PC-9 (cell line): ENCODE measurements at regions of chr3 and their contacts with region 1.

Region 1: DNA sequence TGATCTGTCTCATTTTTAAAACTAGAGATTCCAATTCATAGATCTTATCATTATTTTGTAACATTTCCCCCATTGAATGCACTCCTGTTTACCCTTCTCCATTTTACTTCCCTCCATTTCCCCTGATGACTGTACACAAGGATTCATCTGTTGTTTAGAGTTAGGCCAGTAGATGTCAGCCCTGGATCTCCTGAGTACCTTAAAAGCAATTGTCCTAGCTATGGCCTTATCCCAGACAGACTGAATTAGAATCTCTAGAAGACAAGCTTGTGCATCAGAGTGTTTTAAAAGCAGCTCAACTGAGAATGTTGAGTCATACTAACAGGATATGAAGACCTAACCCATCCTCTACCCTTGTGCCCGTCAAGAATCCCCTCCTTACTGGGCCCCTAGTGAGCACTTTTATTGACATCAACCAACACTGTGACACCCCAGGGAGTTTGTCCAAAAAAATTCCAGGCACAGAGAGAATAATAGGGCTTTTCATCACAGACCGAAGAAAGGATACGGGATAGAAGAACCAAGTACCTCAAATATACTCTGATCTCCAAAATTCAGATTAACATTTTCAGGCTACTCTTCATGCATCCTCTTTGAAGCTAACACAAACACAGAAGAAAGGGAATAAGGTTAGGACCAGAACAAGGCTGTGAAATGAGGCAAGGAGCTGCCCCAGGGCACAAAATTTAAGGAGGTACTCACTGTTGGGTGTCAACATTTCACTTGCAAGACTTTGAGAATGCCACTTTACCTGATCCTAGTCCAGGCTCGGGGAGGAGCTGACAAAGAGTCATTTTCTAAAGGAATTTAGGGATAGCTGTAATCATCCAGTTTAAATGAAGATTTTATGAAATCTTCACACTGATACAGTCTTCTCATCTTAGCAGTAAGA is 17.1 kb downstream of the ZBED2 start:
- DNase-seq: peak; percentile 40 to 79
- H3K4me3 ChIP-seq: no peak overlapping the region
- H3K27ac ChIP-seq: no peak overlapping the region
- H3K4me1 ChIP-seq: peaks cover 12% of the 10 kb centered on the region
- H3K27me3 ChIP-seq: no peaks in the 10 kb centered on the region
- CTCF ChIP-seq: peak; percentile 80

Region 2: GRCh38 chr3:111566844-111567243 is 11.2 kb before region 1 on chr3:
- CTCF ChIA-PET with region 1: no interaction called
- POLR2A ChIA-PET with region 1: no interaction called
- intact Hi-C with region 1: no loop called
- DNase-seq: no peak
- H3K4me3 ChIP-seq: no peak overlapping the region
- H3K27ac ChIP-seq: no peak overlapping the region
- H3K4me1 ChIP-seq: peaks cover 9% of the 10 kb centered on the region; the same call in 1 of the 2 replicates
- H3K27me3 ChIP-seq: no peaks in the 10 kb centered on the region
- CTCF ChIP-seq: no peak

Region 3: DNA sequence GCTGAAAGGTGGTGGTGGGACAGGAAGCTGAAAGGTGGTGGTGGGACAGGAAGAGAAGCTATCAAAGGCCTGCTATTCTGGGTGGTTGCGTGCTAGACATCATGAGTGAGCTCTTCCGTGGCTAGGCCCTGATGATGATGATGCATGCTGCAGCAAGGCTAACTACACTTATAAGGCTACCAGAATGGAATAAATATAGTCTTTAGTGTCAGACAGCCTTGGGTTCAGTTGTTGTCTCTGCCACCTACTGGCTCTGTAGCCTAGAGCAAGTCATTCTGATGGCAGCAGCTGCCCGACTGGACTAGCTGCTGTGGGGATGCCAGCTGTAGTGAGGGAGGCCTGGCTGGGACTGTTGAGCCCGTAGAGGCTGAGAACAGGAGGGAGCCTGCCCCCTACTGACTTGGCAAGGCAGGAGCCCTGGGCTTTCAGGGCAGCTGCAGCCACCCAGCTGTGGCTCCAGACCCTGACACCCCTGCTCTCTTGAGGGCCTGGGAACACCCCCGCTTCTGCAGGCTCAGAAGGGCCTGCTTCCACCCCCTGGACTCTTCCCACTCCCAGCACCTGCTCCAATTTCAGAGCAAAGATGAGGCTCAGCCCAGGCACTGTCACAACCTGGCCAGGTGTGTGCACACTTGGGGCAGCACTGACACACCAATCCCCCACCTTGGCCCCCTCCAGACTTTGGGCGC is 38.5 kb after region 1 on chr3:
- CTCF ChIA-PET with region 1: interaction called, 4 read pairs
- POLR2A ChIA-PET with region 1: no interaction called
- intact Hi-C with region 1: loop called (anchors 1 kb)
- DNase-seq: peak; percentile 25 to 55
- H3K4me3 ChIP-seq: no peak overlapping the region
- H3K27ac ChIP-seq: no peak overlapping the region
- H3K4me1 ChIP-seq: no peaks in the 10 kb centered on the region
- H3K27me3 ChIP-seq: no peaks in the 10 kb centered on the region
- CTCF ChIP-seq: peak; percentile 55

Region 4: GRCh38 chr3:111691293-111691909 is 113.4 kb after region 1 on chr3:
- CTCF ChIA-PET with region 1: interaction called, 18 read pairs
- POLR2A ChIA-PET with region 1: no interaction called
- intact Hi-C with region 1: loop called (anchors 1 kb)
- DNase-seq: peak in 1 of 2 experiments; percentile 60
- H3K4me3 ChIP-seq: no peak overlapping the region
- H3K27ac ChIP-seq: no peak overlapping the region
- H3K4me1 ChIP-seq: peaks cover 37% of the 10 kb centered on the region
- H3K27me3 ChIP-seq: no peaks in the 10 kb centered on the region
- CTCF ChIP-seq: peak; percentile 80

Region 5: GRCh38 chr3:111737706-111738086 is 159.7 kb after region 1 on chr3:
- CTCF ChIA-PET with region 1: no interaction called
- POLR2A ChIA-PET with region 1: no interaction called
- intact Hi-C with region 1: no loop called
- DNase-seq: peak; percentile 51 to 77
- H3K4me3 ChIP-seq: no peak overlapping the region
- H3K27ac ChIP-seq: peak overlapping the region; percentile 91
- H3K4me1 ChIP-seq: peaks cover 73% of the 10 kb centered on the region
- H3K27me3 ChIP-seq: no peaks in the 10 kb centered on the region
- CTCF ChIP-seq: no peak